Activated T-helper 2 cell treated with anti-CD3 and anti-CD28 coated beads, Interferon-gamma antibody, Interleukin-2, Interleukin-4, amounts not matched to agents 10 μg/mL and 5 μg/mL and 100 μg/mL, durations not matched to agents 14 hours and 24 hours and 36 hours (primary cell): ENCODE measurements at regions of chr15 and their contacts with region 1.

Region 1: DNA sequence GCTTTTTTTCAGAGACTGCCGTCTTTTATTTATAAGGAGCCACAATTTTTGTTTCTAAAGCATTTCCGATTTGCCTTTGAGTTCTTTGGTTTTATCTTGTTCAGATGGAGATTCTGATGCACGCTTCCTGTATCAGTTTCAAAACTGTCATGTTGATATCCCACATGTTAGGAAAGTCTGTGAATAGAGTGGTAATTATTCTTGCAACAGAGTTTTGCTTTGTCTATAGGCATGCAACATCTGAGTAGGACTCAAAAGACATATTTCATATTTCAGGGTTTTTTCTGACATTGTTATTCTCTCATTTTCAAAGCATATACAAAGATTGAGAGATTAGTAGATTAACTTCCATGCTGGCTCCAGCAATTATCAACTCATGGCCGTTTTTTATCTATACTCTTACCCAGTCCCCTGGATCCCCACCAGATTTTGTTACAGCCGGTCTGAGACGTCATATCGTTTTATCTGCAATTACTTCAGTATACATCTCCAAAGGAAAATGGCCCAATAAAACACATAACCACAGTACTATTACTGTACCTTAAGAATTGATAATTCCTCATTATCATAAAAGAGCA is 22.4 kb downstream of the PAQR5 start:
- DNase-seq: no peak
- H3K4me3 Mint-ChIP-seq: no peak overlapping the region
- H3K27ac Mint-ChIP-seq: peak overlapping the region; percentile 50
- H3K4me1 Mint-ChIP-seq: peaks cover 21% of the 10 kb centered on the region
- H3K27me3 Mint-ChIP-seq: peaks cover 40% of the 10 kb centered on the region

Region 2: DNA sequence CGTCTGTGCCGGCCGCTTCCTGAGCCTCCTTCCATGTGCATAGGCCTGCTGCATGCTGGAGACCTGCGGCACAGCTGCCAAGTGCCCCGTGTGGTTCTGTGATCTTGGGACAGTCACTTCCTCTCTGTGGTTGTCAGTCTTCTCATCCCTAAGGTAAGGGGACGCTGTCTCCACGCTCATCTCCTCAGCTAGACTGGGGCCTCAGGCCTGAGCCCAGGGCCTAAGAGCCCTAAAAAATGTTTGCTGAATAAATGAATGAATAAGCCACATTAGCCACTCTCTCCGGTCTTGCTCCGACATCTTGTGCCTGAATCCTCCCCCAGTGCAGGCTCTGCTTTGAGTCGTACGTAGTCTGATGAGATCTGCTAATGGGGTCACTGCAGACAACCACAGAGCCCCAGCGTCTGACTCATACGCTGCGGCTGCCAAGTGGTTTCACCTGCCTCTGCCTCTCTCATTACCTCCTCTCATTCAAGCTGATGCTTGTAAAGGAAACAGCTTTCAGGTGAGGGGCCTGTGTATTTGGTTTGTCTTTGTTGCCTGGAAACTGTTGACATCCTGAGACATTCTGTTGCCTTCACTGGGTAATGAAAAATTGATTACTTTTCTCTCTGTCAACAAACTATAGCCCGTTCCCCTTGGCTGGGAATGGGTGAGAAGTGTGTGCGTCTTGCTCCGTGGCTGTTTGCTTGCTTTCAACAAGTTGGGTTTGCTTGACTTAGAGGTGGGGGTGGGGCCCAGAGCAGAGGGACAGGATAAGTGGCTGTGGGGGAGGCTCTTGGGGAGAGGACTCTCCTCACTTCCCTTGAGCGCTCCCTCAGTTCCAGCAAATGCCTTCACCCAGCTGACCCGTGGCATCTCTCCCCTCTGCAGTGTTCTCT is 147.4 kb after region 1 on chr15:
- intact Hi-C with region 1: loop called (anchors 5 kb)
- DNase-seq: peak; percentile 78
- H3K4me3 Mint-ChIP-seq: peak overlapping the region; percentile 5
- H3K27ac Mint-ChIP-seq: peak overlapping the region; percentile 75
- H3K4me1 Mint-ChIP-seq: peaks cover 22% of the 10 kb centered on the region
- H3K27me3 Mint-ChIP-seq: peaks cover 30% of the 10 kb centered on the region

Region 3: GRCh38 chr15:69604072-69604411 is 283.0 kb after region 1 on chr15:
- intact Hi-C with region 1: no loop called
- DNase-seq: no peak
- H3K4me3 Mint-ChIP-seq: no peak overlapping the region
- H3K27ac Mint-ChIP-seq: no peak overlapping the region
- H3K4me1 Mint-ChIP-seq: peaks cover 6% of the 10 kb centered on the region
- H3K27me3 Mint-ChIP-seq: peaks cover 18% of the 10 kb centered on the region